Activated CD4-positive, alpha-beta T cell treated with anti-CD3 and anti-CD28 coated beads, Interleukin-2, amount 10 ng/mL, durations not matched to agents 24 days and 14 days (primary cell): ENCODE measurements at regions of chrX and their contacts with region 1.

Region 1: DNA sequence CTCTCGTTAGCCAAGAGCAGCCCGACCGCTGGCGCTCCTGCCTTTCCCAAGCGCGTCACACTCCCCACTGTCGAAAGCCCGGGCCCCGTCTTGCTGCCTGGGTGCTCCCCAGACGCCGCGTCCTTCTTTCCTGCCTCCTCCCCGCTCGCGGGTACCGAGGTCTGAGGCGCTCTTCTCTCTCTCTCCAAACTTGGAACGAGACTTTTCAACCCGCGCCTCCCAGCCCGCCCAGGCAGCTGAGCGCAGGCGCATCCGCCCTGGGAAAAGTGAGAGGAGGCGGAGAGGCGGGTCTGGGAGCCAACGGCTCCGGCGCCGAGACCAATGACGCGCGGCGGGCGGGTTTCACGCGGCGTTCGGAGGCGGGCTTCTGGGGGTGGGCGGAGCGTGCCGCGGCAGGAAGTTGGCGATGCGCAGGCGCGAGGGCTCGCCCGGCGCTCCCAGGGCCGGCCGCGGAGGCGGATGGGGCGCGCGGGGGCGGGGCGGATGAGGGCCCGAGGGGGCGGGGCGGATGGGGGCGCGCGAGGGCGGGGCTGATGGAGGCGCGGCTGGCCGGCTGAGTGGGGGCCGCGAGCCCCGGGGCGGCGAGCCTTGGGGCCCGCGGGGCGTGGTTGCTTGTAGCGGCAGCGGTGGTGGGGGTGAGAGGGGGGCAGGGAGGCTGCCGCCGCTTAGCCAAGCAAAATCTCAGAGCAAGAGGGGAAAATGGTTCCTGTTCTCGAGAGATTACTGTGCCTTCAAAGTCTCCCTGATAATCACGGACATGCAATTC is at the start of gene RBBP7:
- DNase-seq: peak; percentile 97
- H3K4me3 Mint-ChIP-seq: peak within 1 kb of the TSS; percentile 98
- H3K27ac Mint-ChIP-seq: peak within 1 kb of the TSS; percentile 100
- H3K4me1 Mint-ChIP-seq: peaks cover 17% of the 10 kb centered on the region
- H3K27me3 Mint-ChIP-seq: peaks cover 6% of the 10 kb centered on the region
- total RNA-seq, gene RBBP7: 136 and 137 TPM in 2 replicates

Region 2: DNA sequence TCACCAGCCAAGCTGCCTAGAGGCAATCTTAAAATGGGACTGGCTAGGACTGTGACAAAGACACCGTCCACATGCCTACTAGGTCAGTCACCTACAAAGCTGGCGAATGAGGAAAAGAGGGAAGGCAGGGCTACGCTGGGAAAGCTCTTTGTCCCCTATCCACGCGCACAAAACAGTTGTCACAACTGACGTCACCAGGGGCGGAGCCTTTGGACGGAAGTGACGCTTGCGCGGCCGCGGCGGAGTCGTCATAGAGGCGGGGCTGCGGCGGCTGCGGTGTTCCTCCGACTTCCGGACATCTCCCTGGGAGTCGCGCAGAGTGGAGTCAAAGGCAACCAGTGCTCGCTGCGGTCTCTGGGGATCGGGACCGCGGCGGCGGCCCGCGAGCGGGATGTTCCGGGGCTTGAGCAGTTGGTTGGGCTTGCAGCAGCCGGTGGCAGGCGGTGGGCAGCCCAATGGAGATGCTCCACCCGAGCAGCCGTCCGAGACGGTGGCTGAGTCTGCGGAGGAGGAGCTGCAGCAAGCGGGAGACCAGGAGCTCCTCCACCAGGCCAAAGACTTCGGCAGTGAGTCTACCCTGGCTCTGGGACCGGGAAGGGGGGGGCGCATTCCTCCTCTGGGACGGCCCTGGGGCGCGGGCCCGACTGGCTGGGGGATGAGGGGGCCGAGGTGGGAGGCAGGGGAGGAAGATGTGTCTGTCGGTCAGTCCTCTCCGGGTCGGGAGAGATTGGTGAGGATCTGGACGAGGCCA is 150.8 kb before region 1 on chrX and contains the start of gene SYAP1:
- intact Hi-C with region 1: loop called (anchors 2 kb)
- DNase-seq: peak; percentile 98
- H3K4me3 Mint-ChIP-seq: peak within 1 kb of the TSS; percentile 94
- H3K27ac Mint-ChIP-seq: peak within 1 kb of the TSS; percentile 94
- H3K4me1 Mint-ChIP-seq: peaks cover 21% of the 10 kb centered on the region
- H3K27me3 Mint-ChIP-seq: no peaks in the 10 kb centered on the region
- total RNA-seq, gene SYAP1: 19.6 and 20.1 TPM in 2 replicates

Region 3: GRCh38 chrX:16786139-16786790 is 84.0 kb before region 1 on chrX and contains the start of gene TXLNG:
- intact Hi-C with region 1: loop called (anchors 1 kb)
- DNase-seq: peak; percentile 97
- H3K4me3 Mint-ChIP-seq: peak within 1 kb of the TSS; percentile 99
- H3K27ac Mint-ChIP-seq: peak within 1 kb of the TSS; percentile 96
- H3K4me1 Mint-ChIP-seq: peaks cover 11% of the 10 kb centered on the region
- H3K27me3 Mint-ChIP-seq: no peaks in the 10 kb centered on the region
- total RNA-seq, gene TXLNG: 23.4 and 24.4 TPM in 2 replicates

Region 4: GRCh38 chrX:16826207-16826606 is 44.1 kb before region 1 on chrX:
- intact Hi-C with region 1: loop called (anchors 5 kb)
- DNase-seq: peak; percentile 59
- H3K4me3 Mint-ChIP-seq: no peak overlapping the region
- H3K27ac Mint-ChIP-seq: peak overlapping the region; percentile 15
- H3K4me1 Mint-ChIP-seq: peaks cover 13% of the 10 kb centered on the region
- H3K27me3 Mint-ChIP-seq: no peaks in the 10 kb centered on the region

Region 5: DNA sequence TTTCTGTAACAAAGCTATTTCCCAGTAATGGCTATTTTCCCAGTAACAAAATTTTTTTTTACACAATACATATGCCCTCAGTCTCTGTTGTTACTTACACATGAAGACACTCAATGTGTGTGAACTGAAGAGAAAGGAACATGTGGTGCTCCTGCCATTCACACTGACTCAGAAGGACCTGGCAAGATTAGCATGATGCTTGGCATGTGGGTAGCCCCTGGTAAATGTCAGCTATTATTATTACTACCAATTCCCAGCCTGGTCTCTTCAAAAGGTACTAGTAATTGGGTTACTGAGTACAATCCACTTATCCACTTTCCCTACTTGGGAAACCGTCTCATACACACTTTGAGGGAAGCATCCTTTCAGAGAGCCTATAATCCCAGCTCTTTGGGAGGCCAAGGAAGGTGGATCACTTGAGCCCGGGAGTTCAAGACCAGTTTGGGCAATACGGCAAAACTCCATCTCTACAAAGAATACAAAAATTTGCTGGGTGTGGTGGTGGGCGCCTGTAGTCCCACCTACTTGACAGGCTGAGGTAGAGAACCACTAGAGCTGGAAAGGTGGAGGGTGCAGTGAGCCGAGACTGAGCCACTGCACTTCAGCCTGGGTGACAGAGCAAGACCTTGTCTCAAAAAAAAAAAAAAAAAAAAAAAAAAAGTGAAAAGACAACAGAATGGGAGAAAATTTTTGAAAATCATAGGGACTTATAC is 14.8 kb before region 1 on chrX:
- intact Hi-C with region 1: loop called (anchors 1 kb)
- DNase-seq: no peak
- H3K4me3 Mint-ChIP-seq: no peak overlapping the region
- H3K27ac Mint-ChIP-seq: peak overlapping the region; percentile 48
- H3K4me1 Mint-ChIP-seq: peaks cover 32% of the 10 kb centered on the region
- H3K27me3 Mint-ChIP-seq: no peaks in the 10 kb centered on the region

Region 6: GRCh38 chrX:16882702-16883486 is 12.6 kb after region 1 on chrX:
- intact Hi-C with region 1: loop called (anchors 1 kb)
- DNase-seq: peak; percentile 86
- H3K4me3 Mint-ChIP-seq: peak overlapping the region; percentile 74
- H3K27ac Mint-ChIP-seq: no peak overlapping the region
- H3K4me1 Mint-ChIP-seq: peaks cover 2% of the 10 kb centered on the region
- H3K27me3 Mint-ChIP-seq: peaks cover 13% of the 10 kb centered on the region

Region 7: DNA sequence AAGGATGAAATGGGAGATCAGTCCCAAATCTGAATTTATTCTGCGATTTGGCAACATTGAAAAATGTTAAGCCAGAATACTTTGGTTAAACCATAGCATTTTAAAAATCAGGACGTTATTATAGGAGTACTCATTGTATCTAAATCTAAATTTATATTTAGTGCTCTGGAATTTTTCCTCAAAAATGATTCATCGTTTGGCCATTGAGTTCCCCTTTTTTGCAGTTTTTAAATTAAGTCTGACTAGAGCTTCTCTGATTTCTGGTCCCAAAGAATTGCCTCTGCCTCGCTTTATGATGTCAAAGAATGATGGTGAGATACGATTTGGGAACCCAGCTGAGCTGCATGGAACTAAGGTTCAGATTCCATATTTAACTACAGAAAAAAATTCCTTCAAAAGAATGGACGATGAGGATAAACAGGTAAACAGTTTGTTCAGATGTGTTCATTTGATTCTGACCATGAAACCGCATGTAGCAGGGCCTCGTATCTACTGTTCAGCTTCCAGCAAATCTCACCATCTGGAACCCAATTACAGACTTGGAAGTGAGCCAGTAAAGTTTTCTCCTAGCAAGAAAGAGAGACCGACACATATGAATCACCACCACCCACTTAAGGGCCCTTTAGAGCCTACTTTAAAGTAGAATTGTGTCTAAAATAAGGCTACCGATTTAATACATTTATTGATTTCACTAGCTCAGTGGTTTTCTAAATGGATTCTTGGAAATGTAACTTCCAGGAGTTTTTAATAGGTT is 151.8 kb after region 1 on chrX:
- intact Hi-C with region 1: no loop called
- DNase-seq: no peak
- H3K4me3 Mint-ChIP-seq: no peak overlapping the region
- H3K27ac Mint-ChIP-seq: no peak overlapping the region
- H3K4me1 Mint-ChIP-seq: no peaks in the 10 kb centered on the region
- H3K27me3 Mint-ChIP-seq: no peaks in the 10 kb centered on the region